Panc1 (cell line): ENCODE measurements at regions of chr1 and their contacts with region 1.

Region 1: DNA sequence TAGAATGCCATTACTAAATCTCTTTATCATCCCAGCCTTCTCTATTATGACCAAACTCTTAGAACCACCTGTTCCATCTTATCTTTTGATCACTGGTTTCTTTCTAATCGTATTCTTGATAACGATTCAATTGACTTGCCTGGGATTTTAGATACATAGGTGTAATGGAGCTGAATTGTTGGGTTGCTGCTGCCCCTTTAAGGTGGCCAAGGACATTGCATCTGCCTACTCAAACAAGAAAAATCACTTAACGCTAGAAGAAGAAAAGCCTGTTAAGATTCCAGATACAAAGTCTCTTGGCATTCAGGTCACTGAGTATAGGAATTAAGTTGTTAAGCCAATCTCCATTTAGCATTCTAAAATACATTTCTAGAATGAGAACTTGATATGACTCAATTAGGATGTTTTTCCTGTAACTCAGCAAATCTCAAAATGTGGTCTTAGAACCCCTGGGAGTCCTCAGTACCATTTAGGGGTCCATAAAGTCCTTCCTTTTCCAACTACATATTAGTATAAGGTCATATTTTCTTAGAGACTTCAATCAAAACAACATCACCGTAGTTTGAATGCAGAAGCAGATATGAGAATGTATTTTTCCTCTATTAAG is 12.4 kb downstream of the NEXN start:
- DNase-seq: no peak
- ATAC-seq: peak; percentile 96
- H3K4me3 ChIP-seq: no peak overlapping the region
- H3K27ac ChIP-seq: no peak overlapping the region
- H3K4me1 ChIP-seq: peaks cover 5% of the 10 kb centered on the region; the same call in 1 of the 2 replicates
- H3K27me3 ChIP-seq: no peaks in the 10 kb centered on the region
- CTCF ChIP-seq: peak; percentile 79; the same call in 1 of the 2 replicates

Region 2: DNA sequence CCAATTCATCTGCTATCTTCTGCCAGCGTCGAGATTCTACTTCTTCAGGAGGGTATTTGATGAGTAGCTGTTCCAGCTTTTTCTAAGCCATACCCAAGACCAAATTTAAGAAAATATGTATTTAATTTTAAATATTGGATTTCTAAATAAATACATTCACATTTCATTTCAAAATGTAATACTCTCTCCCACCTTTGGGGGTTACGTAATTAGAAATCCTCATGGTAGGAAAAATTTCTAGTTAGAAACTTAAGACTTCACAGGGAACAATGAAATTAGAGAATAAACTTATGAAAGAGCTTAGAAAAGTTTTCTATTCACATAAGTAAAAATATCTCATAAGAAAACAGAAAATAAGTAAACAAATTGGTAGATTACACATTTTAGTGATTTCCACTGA is 321.2 kb before region 1 on chr1:
- CTCF ChIA-PET with region 1: no interaction called
- POLR2A ChIA-PET with region 1: interaction called, 13 read pairs
- in situ Hi-C with region 1: no loop called
- intact Hi-C with region 1: no loop called
- DNase-seq: no peak
- ATAC-seq: no peak
- H3K4me3 ChIP-seq: no peak overlapping the region
- H3K27ac ChIP-seq: no peak overlapping the region
- H3K4me1 ChIP-seq: no peaks in the 10 kb centered on the region
- H3K27me3 ChIP-seq: no peaks in the 10 kb centered on the region
- CTCF ChIP-seq: no peak

Region 3: GRCh38 chr1:77825131-77825709 is 75.6 kb before region 1 on chr1:
- CTCF ChIA-PET with region 1: no interaction called
- POLR2A ChIA-PET with region 1: no interaction called
- in situ Hi-C with region 1: no loop called
- intact Hi-C with region 1: loop called (anchors 10 kb)
- DNase-seq: peak; percentile 57
- ATAC-seq: peak; percentile 85
- H3K4me3 ChIP-seq: no peak overlapping the region
- H3K27ac ChIP-seq: no peak overlapping the region
- H3K4me1 ChIP-seq: no peaks in the 10 kb centered on the region
- H3K27me3 ChIP-seq: no peaks in the 10 kb centered on the region
- CTCF ChIP-seq: peak; percentile 61